Left ventricle myocardium superior (tissue), 1 donor: ENCODE measurements at regions of chr14 and their contacts with region 1.

Region 1: GRCh38 chr14:91418387-91419043 is 895 bp upstream of the CCDC88C start:
- DNase-seq: peak; percentile 78
- ATAC-seq: peak; percentile 82

Region 2: DNA sequence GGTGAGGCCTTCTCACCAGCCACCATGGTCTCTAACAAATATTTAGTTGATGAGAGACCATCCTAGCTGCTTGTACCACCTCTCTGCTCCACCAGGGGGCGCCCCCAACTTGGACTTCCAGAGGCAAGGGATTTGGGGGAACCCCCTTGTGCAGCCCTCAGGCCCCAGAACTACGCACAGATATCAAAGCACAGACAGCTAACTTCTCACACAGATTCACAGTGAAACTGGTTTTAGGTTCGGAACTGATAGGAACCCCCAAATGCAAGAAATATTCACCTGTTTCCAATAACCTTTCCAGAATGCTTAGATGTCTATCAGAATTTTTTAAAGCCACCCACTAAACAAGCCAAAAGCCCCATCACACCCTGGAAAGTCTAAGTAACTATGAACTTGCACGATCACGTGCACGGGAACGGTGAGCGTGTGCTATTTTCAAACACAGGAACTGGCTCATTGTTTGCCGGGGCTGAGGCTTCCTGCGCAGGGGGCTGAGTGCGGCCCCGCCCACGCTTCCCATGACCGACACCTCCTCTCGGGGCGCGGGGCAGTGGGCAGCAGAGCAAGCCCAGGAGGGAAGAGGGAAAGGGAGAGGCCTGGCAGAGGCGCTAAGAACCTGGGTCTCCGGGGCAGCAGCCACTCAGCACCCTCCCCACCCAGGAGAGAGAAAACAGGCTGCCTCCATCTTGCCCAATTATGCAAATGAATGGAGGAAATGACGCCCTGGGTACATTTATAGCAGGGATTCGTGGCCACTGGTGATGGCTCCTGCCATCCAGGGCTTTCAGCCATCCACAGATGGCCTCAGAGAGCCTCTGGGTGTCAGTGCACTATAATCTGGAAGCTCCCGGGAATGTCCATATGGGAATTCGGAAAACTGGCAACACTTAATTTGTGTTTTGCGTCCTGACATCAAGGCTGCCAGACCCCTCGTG is 94.6 kb before region 1 on chr14:
- intact Hi-C with region 1: loop called (anchors 10 kb)
- DNase-seq: peak; percentile 91
- ATAC-seq: peak; percentile 86